Vagina (tissue), 2 donors: ENCODE measurements at regions of chr3 and their contacts with region 1.

Region 1: GRCh38 chr3:14124615-14125190 is at the starts of genes CHCHD4 and TMEM43:
- DNase-seq: peak; percentile 99
- H3K4me3 ChIP-seq: peak within 1 kb of the TSS; percentile 71 to 95
- H3K27ac ChIP-seq: peak within 1 kb of the TSS; percentile 94
- H3K4me1 ChIP-seq: peaks cover 43% of the 10 kb centered on the region
- H3K27me3 ChIP-seq: no peaks in the 10 kb centered on the region
- CTCF ChIP-seq: peak in 1 of 3 experiments; percentile 16
- POLR2A ChIP-seq: peak in 1 of 2 donors; percentile 27
- total RNA-seq, gene CHCHD4: 10.6 TPM
- total RNA-seq, gene TMEM43: 118 TPM

Region 2: GRCh38 chr3:14144423-14145075 is 19.8 kb after region 1 on chr3:
- intact Hi-C with region 1: loop called (anchors 1 kb)
- DNase-seq: peak in 1 of 2 donors; percentile 93
- H3K4me3 ChIP-seq: peak overlapping the region in 1 of 2 donors; percentile 18
- H3K27ac ChIP-seq: peak overlapping the region; percentile 81
- H3K4me1 ChIP-seq: peaks cover 44% of the 10 kb centered on the region
- H3K27me3 ChIP-seq: no peaks in the 10 kb centered on the region
- CTCF ChIP-seq: no peak
- POLR2A ChIP-seq: no peak

Region 3: DNA sequence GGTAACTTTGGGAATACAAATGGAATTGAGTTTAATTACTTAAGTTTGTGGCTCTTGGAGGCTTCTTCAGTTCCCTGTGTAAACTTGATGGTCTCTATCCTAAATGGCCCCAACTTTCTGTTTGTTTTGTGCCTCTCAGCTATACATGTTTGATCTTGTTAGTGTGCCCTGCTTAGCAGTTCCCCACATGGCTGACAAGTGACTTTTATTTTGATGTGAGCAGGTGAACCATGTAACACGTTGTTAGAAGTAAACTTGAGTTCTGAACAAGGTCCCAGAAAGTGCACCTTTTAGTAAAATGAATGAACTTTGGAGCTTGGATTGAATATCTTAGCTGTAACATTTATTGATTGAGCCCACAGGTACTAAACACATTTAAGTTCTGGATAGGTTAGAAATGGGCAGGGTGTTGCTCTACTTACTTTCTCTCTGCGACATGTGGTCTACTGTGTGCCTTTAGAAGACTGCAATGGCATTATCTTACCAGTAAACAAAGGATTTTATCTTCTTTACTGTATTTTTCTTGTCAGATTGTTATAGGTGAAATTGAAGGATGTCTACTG is 58.4 kb after region 1 on chr3:
- intact Hi-C with region 1: loop called (anchors 5 kb)
- DNase-seq: no peak
- H3K4me3 ChIP-seq: no peak overlapping the region
- H3K27ac ChIP-seq: no peak overlapping the region
- H3K4me1 ChIP-seq: peaks cover 22% of the 10 kb centered on the region
- H3K27me3 ChIP-seq: no peaks in the 10 kb centered on the region
- CTCF ChIP-seq: no peak
- POLR2A ChIP-seq: no peak

Region 4: DNA sequence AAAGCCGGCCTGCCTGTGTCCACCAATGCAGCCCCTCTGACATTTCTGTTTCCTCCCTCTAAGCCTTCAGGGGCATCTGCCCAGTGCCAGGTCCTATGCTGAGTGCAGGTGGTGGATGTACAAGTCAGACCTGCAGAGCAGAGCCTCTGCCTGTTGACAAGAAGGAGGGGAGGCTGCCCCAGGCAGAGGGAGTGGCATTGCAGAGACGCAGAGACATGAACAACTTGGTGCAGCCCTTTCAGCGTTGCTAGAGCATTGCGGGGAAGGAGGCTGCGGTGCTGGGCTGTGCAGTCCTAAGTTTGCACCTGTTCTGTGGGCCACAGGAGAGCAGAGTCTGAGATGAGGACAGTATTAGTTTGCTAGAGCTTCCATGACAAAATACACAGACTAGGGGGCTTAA is 119.1 kb after region 1 on chr3:
- intact Hi-C with region 1: no loop called
- DNase-seq: peak; percentile 40 to 67
- H3K4me3 ChIP-seq: no peak overlapping the region
- H3K27ac ChIP-seq: no peak overlapping the region
- H3K4me1 ChIP-seq: no peaks in the 10 kb centered on the region
- H3K27me3 ChIP-seq: no peaks in the 10 kb centered on the region
- CTCF ChIP-seq: no peak
- POLR2A ChIP-seq: no peak